Sciatic nerve (tissue), 2 donors: ENCODE measurements at regions of chr16 and their contacts with region 1.

Region 1: DNA sequence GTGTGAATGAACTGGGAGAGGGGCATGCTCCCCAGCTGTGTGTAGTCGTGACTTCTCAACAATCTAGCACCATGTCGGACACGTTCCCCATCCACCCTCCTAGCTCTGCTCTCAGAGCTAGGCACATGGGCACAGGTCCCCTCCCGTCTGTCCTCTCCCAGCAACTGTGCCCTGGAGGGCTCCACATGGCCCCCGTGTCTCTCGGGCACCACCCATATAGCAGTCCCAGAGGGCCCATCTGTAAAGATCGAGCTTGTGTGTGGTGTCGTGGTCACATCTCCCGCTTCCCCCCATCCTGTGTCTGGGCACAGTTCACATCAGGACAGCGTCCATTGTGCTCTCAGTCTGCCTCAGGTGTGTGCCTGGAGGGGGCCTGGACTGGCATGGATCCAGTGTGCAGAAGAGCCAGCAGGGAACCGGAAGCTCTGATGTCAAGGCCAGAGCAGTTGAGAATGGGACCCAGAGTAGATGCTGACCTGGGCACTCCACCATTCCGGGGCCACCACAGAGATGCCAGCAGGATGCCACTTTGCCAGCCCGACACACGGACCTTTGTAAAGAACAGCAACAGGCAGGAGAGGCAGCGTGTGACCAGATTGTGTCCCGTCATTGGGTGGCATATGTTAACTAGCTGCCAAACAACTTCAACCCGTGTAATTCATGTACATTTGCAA is 55.7 kb downstream of the MARF1 start:
- DNase-seq: no peak
- ATAC-seq: no peak

Region 2: DNA sequence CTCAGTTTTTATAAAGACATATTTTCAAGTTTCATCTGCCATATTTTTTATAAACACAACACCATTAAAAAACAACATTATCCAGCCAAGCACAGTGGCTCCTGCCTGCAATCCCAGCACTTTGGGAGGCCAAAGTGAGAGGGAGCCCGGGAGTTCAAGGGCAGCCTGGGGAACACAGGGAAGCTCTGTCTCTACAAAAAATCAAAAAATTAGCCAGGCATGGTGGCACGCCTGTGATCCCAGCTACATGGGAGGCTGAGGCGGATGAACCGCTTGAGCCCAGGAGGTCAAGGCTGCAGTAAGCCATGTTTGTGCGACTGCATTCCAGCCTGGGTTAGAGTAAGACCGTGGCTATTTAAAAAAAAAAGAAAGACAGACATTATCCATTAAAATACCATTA is 514.2 kb before region 1 on chr16:
- intact Hi-C with region 1: no loop called
- DNase-seq: no peak
- ATAC-seq: no peak

Region 3: DNA sequence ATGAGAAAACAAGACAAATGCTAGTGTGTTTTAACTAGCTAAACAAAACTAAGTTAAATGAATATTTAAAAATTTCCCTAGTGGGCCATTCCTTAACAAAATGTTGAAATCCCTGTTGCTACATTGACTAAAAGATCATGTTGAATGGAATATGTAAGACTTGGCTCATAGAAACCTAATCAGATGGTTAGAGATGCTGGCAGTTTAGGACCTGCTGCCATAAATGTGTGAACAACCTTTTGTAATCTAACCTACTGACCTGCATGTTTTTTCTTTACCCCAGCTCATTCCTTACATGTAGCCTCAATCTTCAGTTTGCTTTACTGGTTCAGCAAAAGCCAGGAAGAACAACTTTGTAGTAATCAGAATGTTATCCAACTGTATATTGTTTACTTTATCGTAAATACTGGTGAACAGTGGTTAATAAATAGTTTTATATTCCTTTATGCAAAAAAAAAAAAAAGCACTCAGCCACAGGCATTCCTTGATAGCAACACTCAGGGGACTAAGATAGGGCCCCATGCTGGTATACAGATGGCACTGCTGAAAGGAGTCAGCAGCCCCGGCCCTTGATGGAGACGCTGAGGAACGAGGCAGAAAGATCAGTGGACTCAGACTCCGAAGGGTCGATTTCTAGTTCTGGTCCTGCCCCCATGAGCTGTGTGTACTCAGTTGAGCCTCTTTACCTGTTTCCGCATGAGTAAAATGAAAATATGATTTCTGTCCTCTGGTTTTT is 22.5 kb before region 1 on chr16:
- intact Hi-C with region 1: loop called (anchors 2 kb)
- DNase-seq: no peak
- ATAC-seq: peak; percentile 55